Activated T-helper 1 cell treated with anti-CD3 and anti-CD28 coated beads, Interleukin-12 subunit alpha, Interleukin-12 subunit beta, Interleukin-2, Interleukin-4 antibody, amounts not matched to agents 30 ng/mL and 10 ng/mL and 1 ng/mL, durations not matched to agents 14 hours and 24 hours and 36 hours (primary cell): ENCODE measurements at regions of chr18 and their contacts with region 1.

Region 1: DNA sequence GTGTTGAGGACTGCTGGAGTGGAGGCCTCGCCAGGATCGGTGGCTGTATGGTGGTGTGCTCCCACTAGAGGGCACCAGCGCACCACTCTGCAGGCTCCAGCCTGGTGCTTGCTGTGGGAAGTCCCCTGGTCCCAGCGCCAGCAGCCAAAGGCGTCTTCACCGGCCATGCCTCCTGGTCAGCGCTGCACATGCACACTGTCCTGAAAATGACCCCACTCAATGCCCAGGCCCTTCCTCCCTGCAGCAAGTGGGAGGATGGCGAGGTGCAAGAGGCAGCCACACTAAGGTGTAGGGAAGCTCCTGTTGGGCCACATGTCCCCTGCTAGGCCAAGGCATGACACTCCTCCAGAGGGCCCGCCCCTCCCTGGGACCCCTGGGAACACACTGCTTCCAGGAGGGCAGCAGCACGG is 136.5 kb downstream of the CTIF start:
- DNase-seq: peak; percentile 74
- H3K4me3 Mint-ChIP-seq: no peak overlapping the region
- H3K27ac Mint-ChIP-seq: no peak overlapping the region
- H3K4me1 Mint-ChIP-seq: no peaks in the 10 kb centered on the region
- H3K27me3 Mint-ChIP-seq: no peaks in the 10 kb centered on the region

Region 2: DNA sequence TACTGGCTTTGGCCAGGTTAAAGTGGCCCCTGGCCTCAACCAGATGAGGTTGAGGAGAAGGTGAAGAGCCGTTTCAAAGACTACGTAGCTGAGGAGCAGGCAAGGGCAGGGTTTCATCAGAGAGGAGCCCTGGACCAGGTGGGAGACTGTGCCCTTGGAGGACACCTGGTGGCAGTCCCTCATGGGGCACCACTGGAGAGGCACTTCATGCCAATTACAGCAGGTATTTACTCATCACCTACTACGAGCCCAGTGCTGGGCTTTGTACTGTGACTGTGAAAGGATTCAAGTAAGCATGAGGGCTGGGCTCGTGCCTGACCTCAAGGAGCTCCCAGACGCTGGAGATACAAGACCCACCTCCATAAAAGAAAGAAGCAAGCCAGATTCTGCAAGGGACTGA is 237.8 kb after region 1 on chr18:
- intact Hi-C with region 1: loop called (anchors 5 kb)
- DNase-seq: no peak
- H3K4me3 Mint-ChIP-seq: no peak overlapping the region
- H3K27ac Mint-ChIP-seq: peak overlapping the region; percentile 55
- H3K4me1 Mint-ChIP-seq: peaks cover 40% of the 10 kb centered on the region
- H3K27me3 Mint-ChIP-seq: no peaks in the 10 kb centered on the region

Region 3: DNA sequence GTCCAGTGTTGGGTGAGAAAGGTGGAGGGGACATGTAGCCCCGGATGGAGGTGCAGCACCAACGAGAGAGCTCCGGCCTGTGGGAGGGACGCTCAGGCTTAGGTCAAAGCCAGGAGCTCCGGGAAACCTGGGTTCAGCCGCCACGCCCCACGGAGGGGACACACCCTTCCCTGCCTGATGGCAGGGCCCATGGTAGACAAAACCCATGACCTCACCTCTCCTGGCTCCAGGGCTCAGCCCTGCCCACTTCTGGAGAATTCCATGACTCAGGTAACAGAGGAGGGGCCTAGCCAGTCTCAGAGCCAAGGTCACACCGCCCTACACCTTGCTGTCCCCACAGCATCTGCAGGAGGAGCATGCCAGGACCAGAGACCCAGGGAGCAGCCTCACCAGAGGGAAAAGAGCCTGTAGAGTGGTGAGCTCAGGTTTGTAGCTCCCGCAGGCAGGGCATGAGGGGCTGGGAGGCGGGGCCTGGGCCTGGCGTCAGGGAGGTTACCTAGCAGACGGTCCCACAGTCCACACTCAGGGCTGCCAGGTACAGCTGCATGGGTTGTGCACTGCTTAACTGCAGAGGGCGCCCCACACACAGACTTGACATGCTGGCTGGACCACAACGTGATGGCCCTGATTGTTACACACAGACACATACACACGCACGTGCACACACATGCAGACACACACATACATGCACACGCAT is 346.2 kb after region 1 on chr18:
- intact Hi-C with region 1: loop called (anchors 5 kb)
- DNase-seq: peak; percentile 28
- H3K4me3 Mint-ChIP-seq: no peak overlapping the region
- H3K27ac Mint-ChIP-seq: no peak overlapping the region
- H3K4me1 Mint-ChIP-seq: no peaks in the 10 kb centered on the region
- H3K27me3 Mint-ChIP-seq: no peaks in the 10 kb centered on the region

Region 4: GRCh38 chr18:49238433-49239042 is 563.2 kb after region 1 on chr18:
- intact Hi-C with region 1: loop called (anchors 1 kb)
- DNase-seq: no peak
- H3K4me3 Mint-ChIP-seq: no peak overlapping the region
- H3K27ac Mint-ChIP-seq: no peak overlapping the region
- H3K4me1 Mint-ChIP-seq: no peaks in the 10 kb centered on the region
- H3K27me3 Mint-ChIP-seq: no peaks in the 10 kb centered on the region

Region 5: GRCh38 chr18:49447810-49448745 is 772.7 kb after region 1 on chr18:
- intact Hi-C with region 1: loop called (anchors 1 kb)
- DNase-seq: peak; percentile 19
- H3K4me3 Mint-ChIP-seq: no peak overlapping the region
- H3K27ac Mint-ChIP-seq: no peak overlapping the region
- H3K4me1 Mint-ChIP-seq: peaks cover 9% of the 10 kb centered on the region
- H3K27me3 Mint-ChIP-seq: no peaks in the 10 kb centered on the region